Activated T-helper 2 cell treated with anti-CD3 and anti-CD28 coated beads, Interferon-gamma antibody, Interleukin-2, Interleukin-4, amounts not matched to agents 10 μg/mL and 5 μg/mL and 100 μg/mL, durations not matched to agents 14 hours and 24 hours and 36 hours (primary cell): ENCODE measurements at regions of chr3 and their contacts with region 1.

Region 1: GRCh38 chr3:18591120-18591519 is 166.0 kb upstream of the SATB1 start:
- DNase-seq: no peak
- H3K4me3 Mint-ChIP-seq: no peak overlapping the region
- H3K27ac Mint-ChIP-seq: no peak overlapping the region
- H3K4me1 Mint-ChIP-seq: peaks cover 2% of the 10 kb centered on the region
- H3K27me3 Mint-ChIP-seq: no peaks in the 10 kb centered on the region

Region 2: GRCh38 chr3:18354701-18355100 is 236.4 kb before region 1 on chr3:
- intact Hi-C with region 1: no loop called
- DNase-seq: no peak
- H3K4me3 Mint-ChIP-seq: no peak overlapping the region
- H3K27ac Mint-ChIP-seq: no peak overlapping the region
- H3K4me1 Mint-ChIP-seq: peaks cover 39% of the 10 kb centered on the region
- H3K27me3 Mint-ChIP-seq: no peaks in the 10 kb centered on the region

Region 3: DNA sequence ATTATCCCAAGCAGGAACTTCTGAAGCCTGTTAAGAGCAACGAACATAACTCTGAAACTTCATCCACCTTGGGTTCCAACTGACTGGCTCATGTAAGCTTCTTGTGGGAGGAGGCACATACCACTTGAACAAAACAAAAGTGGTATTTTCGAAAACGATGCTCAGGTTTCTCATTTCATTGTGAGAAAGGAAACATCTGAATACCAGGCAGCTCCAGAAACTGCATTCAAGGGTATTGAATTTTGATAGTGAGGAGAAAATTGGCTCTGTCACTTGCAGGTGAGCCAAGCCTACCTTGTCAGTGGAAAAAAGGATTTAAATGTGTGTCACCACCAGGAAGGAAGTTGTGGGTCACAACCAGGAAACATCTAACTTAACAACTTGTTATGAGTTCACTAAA is 52.2 kb after region 1 on chr3:
- intact Hi-C with region 1: loop called (anchors 5 kb)
- DNase-seq: no peak
- H3K4me3 Mint-ChIP-seq: no peak overlapping the region
- H3K27ac Mint-ChIP-seq: peak overlapping the region; percentile 60
- H3K4me1 Mint-ChIP-seq: peaks cover 65% of the 10 kb centered on the region
- H3K27me3 Mint-ChIP-seq: no peaks in the 10 kb centered on the region

Region 4: DNA sequence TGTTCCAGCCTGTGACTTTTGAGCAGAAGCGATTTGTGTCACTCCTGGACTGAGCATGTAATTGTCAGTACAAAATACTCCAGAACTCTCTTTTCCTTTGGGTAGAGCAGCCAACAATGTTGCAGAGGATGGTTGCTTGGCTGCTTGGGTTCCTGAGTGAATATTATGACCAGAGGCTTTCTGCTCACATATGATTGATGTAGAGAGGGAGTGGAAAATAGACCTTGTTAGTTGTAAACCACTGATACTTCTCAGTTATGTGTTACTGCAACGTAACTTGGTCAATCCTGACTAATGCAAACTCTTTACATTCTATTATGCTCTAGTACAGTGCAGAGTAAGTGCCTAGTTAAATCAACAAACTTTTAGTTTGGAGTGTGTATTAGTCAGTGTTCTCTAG is 234.5 kb after region 1 on chr3:
- intact Hi-C with region 1: no loop called
- DNase-seq: no peak
- H3K4me3 Mint-ChIP-seq: no peak overlapping the region
- H3K27ac Mint-ChIP-seq: no peak overlapping the region
- H3K4me1 Mint-ChIP-seq: peaks cover 19% of the 10 kb centered on the region
- H3K27me3 Mint-ChIP-seq: no peaks in the 10 kb centered on the region